ENCODE measurements at regions of chr12 and their contacts with region 1.

Region 1: DNA sequence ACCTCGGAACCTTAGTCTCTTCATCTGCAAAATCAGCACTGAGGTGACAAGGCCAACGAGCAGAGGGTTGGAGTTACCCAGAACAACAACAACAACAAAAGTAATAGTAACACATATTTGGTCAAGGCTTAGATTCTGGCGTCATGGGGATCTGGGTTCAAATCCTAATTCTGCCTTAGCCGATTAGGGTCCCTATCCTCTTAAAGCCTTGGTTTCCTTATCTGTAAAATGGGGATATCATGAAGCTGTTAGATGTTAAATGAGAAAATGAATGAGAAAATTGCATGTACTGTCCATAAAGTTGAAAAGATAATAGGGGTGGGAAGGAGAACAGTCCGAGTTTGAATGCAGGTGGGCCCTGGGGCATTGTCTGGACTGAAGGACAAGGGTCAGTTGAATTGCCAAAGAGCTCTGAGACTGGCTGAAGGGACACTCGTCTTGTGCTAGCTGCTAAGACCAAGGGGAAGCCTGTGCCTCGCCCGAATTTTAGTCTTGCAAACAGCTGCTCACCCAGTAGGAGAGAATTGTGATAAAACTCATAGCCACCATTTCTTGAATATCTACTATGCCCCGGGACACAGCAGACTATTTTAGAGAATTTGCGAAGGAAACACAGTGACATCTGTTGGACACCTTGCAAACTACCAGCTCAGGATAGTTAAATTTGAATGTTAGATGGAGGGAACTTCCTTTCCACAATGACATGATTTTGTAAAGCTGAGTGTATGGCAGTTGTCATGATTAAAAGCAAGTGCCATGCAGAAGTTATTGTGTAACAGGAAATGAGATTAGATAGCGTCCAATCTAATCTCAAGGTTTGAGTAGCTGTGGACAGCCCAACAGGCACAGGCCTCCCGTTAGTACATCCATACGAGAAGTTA is 6.8 kb upstream of the HNF1A start:
- DNase-seq: peak; percentile 62
- H3K4me3 Mint-ChIP-seq: no peak overlapping the region
- H3K27ac Mint-ChIP-seq: no peak overlapping the region
- H3K4me1 Mint-ChIP-seq: peaks cover 4% of the 10 kb centered on the region
- H3K27me3 Mint-ChIP-seq: no peaks in the 10 kb centered on the region

Region 2: DNA sequence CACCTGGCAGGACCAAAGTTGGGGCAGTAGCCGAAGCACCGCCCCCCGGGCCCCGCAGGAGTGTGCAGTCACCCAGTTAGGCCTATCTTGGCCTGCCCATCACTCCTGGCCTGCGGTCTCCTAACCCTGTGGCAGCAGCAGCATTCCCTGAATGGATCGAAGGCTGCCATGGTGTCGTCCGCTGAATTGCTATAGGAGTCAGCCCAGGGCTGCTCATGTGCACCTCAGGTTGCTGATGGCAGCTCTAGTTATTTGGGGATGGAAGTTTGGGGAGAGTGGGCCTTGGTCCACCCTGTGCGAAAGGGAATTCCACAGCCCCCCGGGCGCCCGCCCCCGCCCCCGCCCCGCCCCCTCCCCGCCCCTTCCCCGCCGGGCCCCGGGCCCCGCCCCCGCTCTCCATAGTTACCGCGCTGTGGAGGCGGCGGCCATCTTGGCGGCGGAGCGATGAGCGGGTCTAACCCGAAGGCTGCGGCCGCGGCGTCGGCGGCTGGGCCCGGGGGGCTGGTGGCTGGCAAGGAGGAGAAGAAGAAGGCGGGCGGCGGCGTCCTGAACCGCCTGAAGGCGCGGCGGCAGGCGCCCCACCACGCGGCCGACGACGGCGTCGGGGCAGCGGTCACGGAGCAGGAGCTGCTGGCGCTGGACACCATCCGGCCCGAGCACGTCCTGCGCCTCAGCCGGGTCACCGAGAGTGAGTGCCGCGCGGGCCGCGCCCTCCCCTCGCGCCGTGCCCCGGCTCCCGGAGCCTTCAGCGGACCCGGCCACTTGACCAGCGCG is 261.3 kb before region 1 on chr12 and contains the start of gene UNC119B:
- CTCF ChIA-PET with region 1: interaction called, 3 read pairs
- intact Hi-C with region 1: loop called (anchors 1 kb)
- DNase-seq: peak; percentile 73
- H3K4me3 Mint-ChIP-seq: peak within 1 kb of the TSS; percentile 85
- H3K27ac Mint-ChIP-seq: peak within 1 kb of the TSS; percentile 84
- H3K4me1 Mint-ChIP-seq: peaks cover 32% of the 10 kb centered on the region
- H3K27me3 Mint-ChIP-seq: no peaks in the 10 kb centered on the region
- total RNA-seq, gene UNC119B: 31.9 to 32.6 TPM

Region 3: GRCh38 chr12:120750806-120751205 is 220.7 kb before region 1 on chr12:
- CTCF ChIA-PET with region 1: interaction called, 5 read pairs
- intact Hi-C with region 1: loop called (anchors 1 kb)
- DNase-seq: peak; percentile 45
- H3K4me3 Mint-ChIP-seq: no peak overlapping the region
- H3K27ac Mint-ChIP-seq: no peak overlapping the region
- H3K4me1 Mint-ChIP-seq: no peaks in the 10 kb centered on the region
- H3K27me3 Mint-ChIP-seq: peaks cover 2% of the 10 kb centered on the region

Region 4: GRCh38 chr12:120856980-120857379 is 114.6 kb before region 1 on chr12:
- CTCF ChIA-PET with region 1: interaction called, 14 read pairs
- intact Hi-C with region 1: loop called (anchors 1 kb)
- DNase-seq: no peak
- H3K4me3 Mint-ChIP-seq: no peak overlapping the region
- H3K27ac Mint-ChIP-seq: no peak overlapping the region
- H3K4me1 Mint-ChIP-seq: peaks cover 38% of the 10 kb centered on the region
- H3K27me3 Mint-ChIP-seq: no peaks in the 10 kb centered on the region

Region 5: DNA sequence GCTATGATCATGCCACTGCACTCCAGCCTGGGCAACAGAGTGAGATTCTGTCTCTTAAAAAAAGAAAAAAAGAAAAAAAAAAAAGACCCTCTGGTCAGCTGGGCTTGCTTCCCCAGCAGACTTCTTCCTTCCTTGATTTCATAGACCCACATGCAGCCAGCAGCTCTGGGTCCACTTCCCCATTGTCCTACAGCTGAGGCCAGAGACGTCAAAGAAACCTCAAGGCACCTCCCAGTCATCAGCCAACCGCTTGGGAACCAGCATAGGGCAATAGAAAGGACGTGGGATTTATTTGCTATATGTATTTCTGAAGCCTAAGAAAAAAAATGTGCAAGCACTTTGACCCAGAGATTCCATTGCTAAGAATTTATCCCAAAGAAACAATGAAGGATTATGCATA is 32.0 kb before region 1 on chr12:
- CTCF ChIA-PET with region 1: interaction called, 24 read pairs
- intact Hi-C with region 1: loop called (anchors 1 kb)
- DNase-seq: no peak
- H3K4me3 Mint-ChIP-seq: no peak overlapping the region
- H3K27ac Mint-ChIP-seq: no peak overlapping the region
- H3K4me1 Mint-ChIP-seq: peaks cover under 1% of the 10 kb centered on the region
- H3K27me3 Mint-ChIP-seq: peaks cover 3% of the 10 kb centered on the region